ENCODE measurements at regions of chr13 and their contacts with region 1.

Region 1: GRCh38 chr13:75760131-75761021 is 124.2 kb downstream of the LMO7 start:
- DNase-seq: no peak
- H3K4me3 Mint-ChIP-seq: peak overlapping the region; percentile 76
- H3K27ac Mint-ChIP-seq: peak overlapping the region; percentile 49
- H3K4me1 Mint-ChIP-seq: peaks cover 71% of the 10 kb centered on the region
- H3K27me3 Mint-ChIP-seq: no peaks in the 10 kb centered on the region

Region 2: GRCh38 chr13:75271846-75272245 is 488.5 kb before region 1 on chr13:
- intact Hi-C with region 1: no loop called
- DNase-seq: no peak
- H3K4me3 Mint-ChIP-seq: no peak overlapping the region
- H3K27ac Mint-ChIP-seq: no peak overlapping the region
- H3K4me1 Mint-ChIP-seq: no peaks in the 10 kb centered on the region
- H3K27me3 Mint-ChIP-seq: peaks cover 4% of the 10 kb centered on the region

Region 3: GRCh38 chr13:75319254-75319653 is 441.1 kb before region 1 on chr13:
- intact Hi-C with region 1: loop called (anchors 5 kb)
- DNase-seq: no peak
- H3K4me3 Mint-ChIP-seq: peak overlapping the region; percentile 9
- H3K27ac Mint-ChIP-seq: peak overlapping the region; percentile 99
- H3K4me1 Mint-ChIP-seq: peaks cover 68% of the 10 kb centered on the region
- H3K27me3 Mint-ChIP-seq: no peaks in the 10 kb centered on the region

Region 4: GRCh38 chr13:75482070-75482819 is 278.1 kb before region 1 on chr13 and contains the start of gene TBC1D4:
- intact Hi-C with region 1: loop called (anchors 2 kb)
- DNase-seq: peak; percentile 40
- H3K4me3 Mint-ChIP-seq: peak within 1 kb of the TSS; percentile 99
- H3K27ac Mint-ChIP-seq: peak within 1 kb of the TSS; percentile 89
- H3K4me1 Mint-ChIP-seq: peaks cover 45% of the 10 kb centered on the region
- H3K27me3 Mint-ChIP-seq: peaks cover 49% of the 10 kb centered on the region
- total RNA-seq, gene TBC1D4: 66.6 and 73.5 TPM in 2 replicates

Region 5: GRCh38 chr13:75600371-75600770 is 160.0 kb before region 1 on chr13:
- intact Hi-C with region 1: no loop called
- DNase-seq: no peak
- H3K4me3 Mint-ChIP-seq: no peak overlapping the region
- H3K27ac Mint-ChIP-seq: no peak overlapping the region
- H3K4me1 Mint-ChIP-seq: no peaks in the 10 kb centered on the region
- H3K27me3 Mint-ChIP-seq: no peaks in the 10 kb centered on the region

Region 6: DNA sequence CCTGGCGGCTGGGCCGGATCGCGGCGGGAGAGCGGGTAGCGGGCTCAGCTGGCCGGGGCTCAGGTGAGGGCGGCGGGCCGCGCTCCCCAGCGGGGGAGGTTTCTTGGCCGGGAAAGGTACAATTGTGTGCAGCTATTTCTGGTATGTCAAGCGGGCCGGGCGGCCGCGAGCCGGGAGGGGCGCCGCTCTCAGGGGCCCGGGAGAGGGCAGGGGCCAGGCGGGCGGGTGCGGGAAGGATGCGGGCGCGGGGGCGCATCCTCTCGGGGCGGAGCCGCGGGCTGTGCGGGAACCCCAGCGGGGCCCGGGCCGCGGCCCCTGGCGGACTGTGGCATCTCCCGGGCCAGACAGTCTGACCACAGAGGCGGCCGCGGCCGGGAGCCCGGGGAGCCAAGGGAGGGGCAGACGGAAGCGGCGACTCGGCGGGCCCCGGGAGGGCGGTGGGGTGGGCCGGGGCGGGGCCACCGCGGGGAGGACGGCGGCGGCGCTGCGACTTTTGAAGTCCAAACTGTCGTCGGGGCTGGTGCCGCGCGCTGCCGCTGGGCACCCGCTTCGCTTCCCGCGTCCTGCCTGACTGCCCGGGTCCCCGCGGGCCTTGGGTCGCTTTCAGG is 124.4 kb before region 1 on chr13 and contains the start of gene LMO7:
- intact Hi-C with region 1: loop called (anchors 2 kb)
- DNase-seq: peak; percentile 37
- H3K4me3 Mint-ChIP-seq: peak within 1 kb of the TSS; percentile 76
- H3K27ac Mint-ChIP-seq: no peak within 1 kb of the TSS
- H3K4me1 Mint-ChIP-seq: peaks cover 16% of the 10 kb centered on the region
- H3K27me3 Mint-ChIP-seq: peaks cover 26% of the 10 kb centered on the region
- total RNA-seq, gene LMO7: 2.9 and 3.2 TPM in 2 replicates

Region 7: GRCh38 chr13:75771818-75772217 is 11.4 kb after region 1 on chr13:
- intact Hi-C with region 1: loop called (anchors 1 kb)
- DNase-seq: no peak
- H3K4me3 Mint-ChIP-seq: no peak overlapping the region
- H3K27ac Mint-ChIP-seq: no peak overlapping the region
- H3K4me1 Mint-ChIP-seq: peaks cover under 1% of the 10 kb centered on the region
- H3K27me3 Mint-ChIP-seq: no peaks in the 10 kb centered on the region

Region 8: DNA sequence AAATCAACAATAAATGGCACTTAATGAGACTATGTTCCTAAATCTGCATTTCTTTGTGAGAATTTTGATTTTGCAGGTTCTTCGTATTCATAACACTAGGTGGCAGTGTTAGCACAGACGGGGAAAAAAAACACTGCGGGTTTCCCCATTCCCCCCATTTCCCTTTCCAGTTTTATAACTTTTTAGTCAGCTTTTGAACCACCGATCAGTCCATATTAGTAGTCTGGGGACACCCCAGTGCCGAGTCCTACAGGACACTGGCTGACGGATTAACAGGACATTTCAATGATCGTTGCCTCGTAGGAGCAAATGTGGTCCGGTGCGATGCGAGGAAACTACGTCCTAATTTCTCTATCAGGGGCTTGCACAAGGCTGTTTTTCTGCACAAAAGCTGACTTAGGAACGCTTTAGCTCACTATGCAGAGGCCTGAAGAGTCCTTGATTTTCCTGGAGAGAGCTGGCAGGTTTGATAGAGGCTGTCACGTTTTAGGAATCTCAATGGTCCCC is 110.1 kb after region 1 on chr13:
- intact Hi-C with region 1: loop called (anchors 2 kb)
- DNase-seq: no peak
- H3K4me3 Mint-ChIP-seq: peak overlapping the region; percentile 53
- H3K27ac Mint-ChIP-seq: no peak overlapping the region
- H3K4me1 Mint-ChIP-seq: peaks cover 18% of the 10 kb centered on the region
- H3K27me3 Mint-ChIP-seq: peaks cover 3% of the 10 kb centered on the region